H1 (cell line): ENCODE measurements at regions of chr3 and their contacts with region 1.

Region 1: GRCh38 chr3:32510075-32510724 is 7.5 kb upstream of the CMTM6 start:
- DNase-seq: peak in 1 of 2 experiments; percentile 75
- H3K4me3 ChIP-seq: no peak overlapping the region
- H3K27ac ChIP-seq: no peak overlapping the region
- H3K4me1 ChIP-seq: peaks cover 0 to 2% (median 0%) of the 10 kb centered on the region in 4 experiments; a peak in 1 of 7 replicates
- H3K27me3 ChIP-seq: no peaks in the 10 kb centered on the region
- CTCF ChIP-seq: peak in 2 of 3 experiments; percentile 85 to 90; a peak in 3 of 4 replicates
- EP300 ChIP-seq: no peak
- POLR2A ChIP-seq: no peak
- RAD21 ChIP-seq: peak; percentile 99

Region 2: DNA sequence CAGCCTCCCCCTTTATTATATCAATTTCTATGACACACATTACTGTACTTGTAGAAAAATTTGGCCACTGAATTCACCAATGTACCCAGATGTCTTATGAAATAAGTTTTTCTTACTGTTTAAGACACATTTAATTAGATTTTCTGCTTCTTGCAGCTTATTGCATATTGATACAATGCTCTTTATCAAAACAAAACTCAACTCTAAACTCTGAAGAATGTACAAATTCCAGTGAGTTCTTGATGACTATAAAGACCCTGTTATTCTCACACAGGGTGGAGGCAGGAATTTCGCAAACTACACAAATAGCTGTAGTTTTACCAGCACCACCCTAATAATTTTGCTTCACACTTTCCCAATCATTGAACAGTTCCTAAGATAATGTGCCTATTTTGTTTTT is 29.6 kb before region 1 on chr3:
- CTCF ChIA-PET with region 1: no interaction called
- POLR2A ChIA-PET with region 1: no interaction called
- DNase-seq: no peak
- H3K4me3 ChIP-seq: no peak overlapping the region
- H3K27ac ChIP-seq: no peak overlapping the region
- H3K4me1 ChIP-seq: no peaks in the 10 kb centered on the region
- H3K27me3 ChIP-seq: no peaks in the 10 kb centered on the region
- CTCF ChIP-seq: no peak
- EP300 ChIP-seq: no peak
- POLR2A ChIP-seq: no peak
- RAD21 ChIP-seq: no peak

Region 3: GRCh38 chr3:32660634-32661033 is 150.4 kb after region 1 on chr3:
- CTCF ChIA-PET with region 1: interaction called, 34 read pairs
- POLR2A ChIA-PET with region 1: no interaction called
- DNase-seq: no peak
- H3K4me3 ChIP-seq: no peak overlapping the region
- H3K27ac ChIP-seq: no peak overlapping the region
- H3K4me1 ChIP-seq: no peaks in the 10 kb centered on the region
- H3K27me3 ChIP-seq: no peaks in the 10 kb centered on the region
- CTCF ChIP-seq: no peak
- EP300 ChIP-seq: no peak
- POLR2A ChIP-seq: no peak
- RAD21 ChIP-seq: no peak

Region 4: DNA sequence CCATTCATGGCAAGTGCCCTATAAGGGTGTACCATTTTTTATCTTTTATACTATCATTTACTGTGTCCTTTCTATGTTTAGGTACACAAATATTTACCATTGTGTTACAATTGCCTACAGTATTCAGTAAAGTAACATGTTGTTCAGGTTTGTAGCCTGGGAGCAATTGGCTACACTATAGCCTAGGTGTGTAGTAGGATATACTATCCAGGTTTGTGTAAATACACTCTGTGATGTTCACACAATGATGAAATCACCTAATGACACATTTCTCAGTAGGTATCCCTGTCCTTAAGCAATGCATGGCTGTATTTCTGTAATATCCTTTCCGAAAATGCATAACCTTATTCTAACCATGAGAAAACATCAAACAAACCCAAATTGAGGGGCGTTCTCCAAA is 156.9 kb after region 1 on chr3:
- CTCF ChIA-PET with region 1: interaction called, 34 read pairs
- POLR2A ChIA-PET with region 1: no interaction called
- DNase-seq: no peak
- H3K4me3 ChIP-seq: no peak overlapping the region
- H3K27ac ChIP-seq: no peak overlapping the region
- H3K4me1 ChIP-seq: no peaks in the 10 kb centered on the region
- H3K27me3 ChIP-seq: no peaks in the 10 kb centered on the region
- CTCF ChIP-seq: no peak
- EP300 ChIP-seq: no peak
- POLR2A ChIP-seq: no peak
- RAD21 ChIP-seq: no peak

Region 5: GRCh38 chr3:32675164-32675563 is 165.0 kb after region 1 on chr3:
- CTCF ChIA-PET with region 1: interaction called, 22 read pairs
- POLR2A ChIA-PET with region 1: no interaction called
- DNase-seq: no peak
- H3K4me3 ChIP-seq: no peak overlapping the region
- H3K27ac ChIP-seq: no peak overlapping the region
- H3K4me1 ChIP-seq: no peaks in the 10 kb centered on the region
- H3K27me3 ChIP-seq: no peaks in the 10 kb centered on the region
- CTCF ChIP-seq: no peak
- EP300 ChIP-seq: no peak
- POLR2A ChIP-seq: no peak
- RAD21 ChIP-seq: no peak